AG04450 (cell line): ENCODE measurements at regions of chr4 and their contacts with region 1.

Region 1: DNA sequence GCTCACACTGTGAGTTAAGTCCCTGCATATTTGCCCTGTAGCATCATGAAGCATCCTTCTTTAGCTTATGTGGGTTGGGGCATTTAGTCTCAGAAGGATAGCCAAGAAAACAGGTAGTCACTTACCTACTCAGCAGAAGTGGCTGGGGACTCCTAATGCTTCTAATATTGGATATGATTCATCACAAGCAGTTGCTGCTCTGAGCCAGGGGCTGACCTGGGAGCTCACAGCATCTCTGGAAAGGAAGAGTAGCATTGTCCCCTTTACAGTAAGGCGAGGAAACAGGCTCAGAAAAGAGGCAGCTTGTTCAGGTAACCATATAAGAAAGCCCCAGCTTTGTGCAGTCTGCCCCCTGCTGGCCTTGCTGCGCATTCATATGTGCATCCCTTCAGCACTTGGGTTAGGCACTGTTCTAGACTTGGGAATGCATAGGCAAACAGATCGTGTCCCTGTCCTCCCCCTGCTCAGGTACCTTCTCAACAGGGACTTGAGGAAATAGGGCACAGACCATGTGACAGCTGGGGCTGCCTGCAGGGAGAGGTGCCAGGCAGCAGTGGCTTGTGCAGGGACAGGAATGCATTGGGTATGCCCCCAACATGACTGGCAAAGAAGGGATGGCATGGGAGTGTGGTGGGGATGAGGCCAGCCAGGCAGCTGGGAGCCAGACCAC is 35.7 kb upstream of the TBC1D14 start:
- DNase-seq: no peak
- H3K4me3 ChIP-seq: no peak overlapping the region
- H3K27ac ChIP-seq: no peak overlapping the region
- H3K27me3 ChIP-seq: no peaks in the 10 kb centered on the region
- CTCF ChIP-seq: peak; percentile 87

Region 2: GRCh38 chr4:6727081-6727942 is 146.6 kb before region 1 on chr4:
- CTCF ChIA-PET with region 1: interaction called, 197 read pairs
- POLR2A ChIA-PET with region 1: no interaction called
- DNase-seq: no peak
- H3K4me3 ChIP-seq: no peak overlapping the region
- H3K27ac ChIP-seq: peak overlapping the region; percentile 39
- H3K27me3 ChIP-seq: no peaks in the 10 kb centered on the region
- CTCF ChIP-seq: no peak

Region 3: DNA sequence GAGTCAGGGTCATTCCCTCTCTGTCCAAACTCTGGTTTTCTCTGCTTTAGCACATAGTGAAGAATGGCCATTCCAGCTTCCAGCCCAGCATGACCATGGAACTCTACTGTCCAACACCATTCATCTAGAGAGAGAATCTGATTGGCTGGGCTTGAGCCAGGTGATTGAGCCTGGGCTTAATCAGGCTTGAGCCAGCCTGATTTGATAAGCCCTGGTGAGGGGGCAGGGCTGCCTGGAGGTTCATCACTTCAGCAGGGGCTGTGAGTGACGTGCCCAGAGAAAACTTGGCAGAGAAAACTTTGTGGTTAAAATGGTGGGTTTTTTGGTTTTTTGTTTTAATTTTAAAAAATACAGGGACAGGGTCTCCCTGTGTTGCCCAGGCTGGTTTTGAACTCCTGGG is 28.9 kb before region 1 on chr4:
- CTCF ChIA-PET with region 1: interaction called, 22 read pairs
- POLR2A ChIA-PET with region 1: no interaction called
- DNase-seq: no peak
- H3K4me3 ChIP-seq: no peak overlapping the region
- H3K27ac ChIP-seq: no peak overlapping the region
- H3K27me3 ChIP-seq: no peaks in the 10 kb centered on the region
- CTCF ChIP-seq: no peak

Region 4: DNA sequence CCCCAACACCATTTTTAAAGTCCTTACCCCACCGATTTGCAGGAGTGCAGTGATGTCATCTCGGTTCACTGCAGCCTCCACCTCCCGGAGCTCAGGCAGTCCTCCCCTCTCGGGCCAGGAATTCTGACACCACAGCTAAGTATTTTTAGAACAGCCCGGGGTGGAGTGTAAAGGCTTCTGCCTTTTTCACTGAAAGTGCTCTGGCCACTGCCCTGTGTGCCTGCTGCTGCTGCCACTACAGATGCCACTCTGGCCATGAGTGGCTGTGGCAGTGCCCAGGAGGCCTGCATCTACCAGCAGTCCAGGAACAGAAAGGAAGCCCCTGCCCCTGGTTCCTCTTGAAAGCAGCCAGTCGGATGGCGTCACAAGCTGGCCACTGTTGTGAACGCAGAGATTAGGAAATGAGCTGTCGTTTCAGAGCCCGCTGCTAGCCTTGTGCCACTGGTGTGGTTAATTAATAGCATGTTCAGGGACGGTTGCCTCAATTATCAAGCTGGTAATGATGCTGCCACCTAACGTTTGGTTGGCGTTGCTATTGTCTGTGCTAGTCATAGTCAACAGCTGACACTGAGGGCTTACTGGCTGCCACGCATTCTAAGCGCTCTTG is 12.1 kb after region 1 on chr4:
- CTCF ChIA-PET with region 1: interaction called, 30 read pairs
- POLR2A ChIA-PET with region 1: no interaction called
- DNase-seq: no peak
- H3K4me3 ChIP-seq: no peak overlapping the region
- H3K27ac ChIP-seq: peak overlapping the region; percentile 61
- H3K27me3 ChIP-seq: no peaks in the 10 kb centered on the region
- CTCF ChIP-seq: no peak

Region 5: DNA sequence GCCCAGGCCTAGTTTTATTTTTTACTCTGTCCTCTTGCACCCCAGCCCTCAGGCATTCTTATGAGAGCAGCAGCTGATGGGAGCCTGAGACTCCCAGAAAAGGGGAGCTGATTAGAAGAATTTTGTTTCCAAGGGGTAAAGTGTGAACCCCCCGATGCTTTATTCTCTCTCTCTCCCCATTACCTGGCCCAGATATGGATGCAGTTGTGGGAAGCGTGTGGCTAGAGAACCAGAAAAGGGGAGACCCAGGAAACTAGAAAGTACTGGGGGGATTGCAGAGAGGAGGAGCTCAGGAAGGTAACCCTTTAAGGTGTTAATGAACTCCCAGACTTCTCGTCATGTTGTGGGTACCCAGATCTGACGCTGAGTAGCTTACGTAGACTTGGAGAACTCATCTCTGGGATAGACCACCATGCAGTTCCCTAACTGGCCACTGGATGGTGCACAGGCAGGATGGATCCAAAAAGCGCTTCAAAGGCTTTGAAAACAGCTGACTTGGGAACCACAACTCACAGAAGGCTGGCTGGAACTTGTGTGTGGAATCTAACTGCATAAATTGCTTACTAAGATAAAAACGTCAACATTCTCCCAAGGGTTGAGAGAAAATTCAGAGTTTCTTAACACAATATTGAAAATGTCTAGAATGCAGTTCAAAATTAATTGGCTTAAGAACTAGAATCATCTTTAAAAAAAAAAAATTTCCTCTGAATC is 100.4 kb after region 1 on chr4:
- CTCF ChIA-PET with region 1: interaction called, 15 read pairs
- POLR2A ChIA-PET with region 1: no interaction called
- DNase-seq: peak; percentile 67
- H3K4me3 ChIP-seq: no peak overlapping the region
- H3K27ac ChIP-seq: no peak overlapping the region
- H3K27me3 ChIP-seq: no peaks in the 10 kb centered on the region
- CTCF ChIP-seq: peak; percentile 99

Region 6: DNA sequence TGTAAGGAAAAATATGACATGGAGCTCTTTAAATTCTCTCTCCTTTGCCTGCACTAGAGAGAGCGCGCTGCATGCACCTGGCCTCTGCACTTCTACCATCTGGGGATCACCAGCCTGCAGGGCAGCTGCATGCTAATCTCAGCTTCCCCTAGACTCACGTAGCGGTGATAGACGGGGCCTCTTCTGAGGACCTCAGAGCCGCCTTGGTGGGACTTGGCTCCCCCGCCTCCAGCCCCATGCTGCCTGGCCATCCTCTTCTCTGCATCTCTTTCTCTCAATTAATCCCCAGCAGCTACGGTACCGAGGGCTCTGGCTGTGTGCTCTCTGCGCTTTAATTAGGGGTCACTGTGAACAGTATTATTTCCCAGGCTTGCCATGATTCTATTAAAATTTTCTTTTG is 613.6 kb after region 1 on chr4:
- CTCF ChIA-PET with region 1: no interaction called
- POLR2A ChIA-PET with region 1: no interaction called
- DNase-seq: no peak
- H3K4me3 ChIP-seq: no peak overlapping the region
- H3K27ac ChIP-seq: no peak overlapping the region
- H3K27me3 ChIP-seq: peaks cover 32% of the 10 kb centered on the region
- CTCF ChIP-seq: no peak